Naive thymus-derived CD4-positive, alpha-beta T cell (primary cell): ENCODE measurements at regions of chr12 and their contacts with region 1.

Region 1: DNA sequence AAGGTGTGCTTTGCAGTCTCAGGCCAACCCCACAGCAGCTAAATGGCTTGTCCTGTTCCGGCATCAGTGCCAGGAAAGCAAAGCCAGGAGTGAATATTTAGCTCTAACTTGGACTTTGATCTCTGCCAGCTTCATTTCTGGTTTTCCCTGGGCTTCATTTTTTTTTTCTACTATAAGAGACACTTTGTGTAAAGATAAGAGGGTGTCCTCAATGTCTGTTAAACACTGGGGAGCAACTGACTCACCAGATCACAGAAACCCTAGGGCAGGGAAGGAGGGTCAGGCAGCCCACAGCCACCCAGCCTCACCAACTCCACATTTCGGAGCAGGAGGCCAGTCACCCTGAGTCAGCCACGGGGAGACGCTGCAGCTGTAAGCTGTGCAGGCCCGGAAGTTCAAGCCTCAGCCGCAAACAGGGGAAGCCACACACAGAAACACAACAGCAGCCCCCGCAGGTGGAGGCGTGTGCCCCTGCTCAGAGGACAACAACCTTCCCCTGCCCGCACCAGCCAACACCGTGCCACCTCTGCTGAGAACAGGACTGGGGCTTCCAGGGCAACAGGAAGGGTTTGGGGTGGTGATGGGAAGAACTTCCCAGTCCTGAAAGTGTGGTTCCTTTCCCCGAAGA is 6.3 kb downstream of the TNFRSF1A start:
- DNase-seq: peak; percentile 56 to 85 (median 81)
- ATAC-seq: peak; percentile 82
- H3K4me3 ChIP-seq: peak overlapping the region; percentile 88
- H3K4me3 Mint-ChIP-seq: no peak overlapping the region
- H3K27ac ChIP-seq: peak overlapping the region; percentile 92
- H3K27ac Mint-ChIP-seq: no peak overlapping the region
- H3K4me1 ChIP-seq: peaks cover 58 to 67% of the 10 kb centered on the region in 2 donors
- H3K4me1 Mint-ChIP-seq: peaks cover 4 to 44% (median 36%) of the 10 kb centered on the region in 7 donors
- H3K27me3 ChIP-seq: no peaks in the 10 kb centered on the region
- H3K27me3 Mint-ChIP-seq: no peaks in the 10 kb centered on the region

Region 2: DNA sequence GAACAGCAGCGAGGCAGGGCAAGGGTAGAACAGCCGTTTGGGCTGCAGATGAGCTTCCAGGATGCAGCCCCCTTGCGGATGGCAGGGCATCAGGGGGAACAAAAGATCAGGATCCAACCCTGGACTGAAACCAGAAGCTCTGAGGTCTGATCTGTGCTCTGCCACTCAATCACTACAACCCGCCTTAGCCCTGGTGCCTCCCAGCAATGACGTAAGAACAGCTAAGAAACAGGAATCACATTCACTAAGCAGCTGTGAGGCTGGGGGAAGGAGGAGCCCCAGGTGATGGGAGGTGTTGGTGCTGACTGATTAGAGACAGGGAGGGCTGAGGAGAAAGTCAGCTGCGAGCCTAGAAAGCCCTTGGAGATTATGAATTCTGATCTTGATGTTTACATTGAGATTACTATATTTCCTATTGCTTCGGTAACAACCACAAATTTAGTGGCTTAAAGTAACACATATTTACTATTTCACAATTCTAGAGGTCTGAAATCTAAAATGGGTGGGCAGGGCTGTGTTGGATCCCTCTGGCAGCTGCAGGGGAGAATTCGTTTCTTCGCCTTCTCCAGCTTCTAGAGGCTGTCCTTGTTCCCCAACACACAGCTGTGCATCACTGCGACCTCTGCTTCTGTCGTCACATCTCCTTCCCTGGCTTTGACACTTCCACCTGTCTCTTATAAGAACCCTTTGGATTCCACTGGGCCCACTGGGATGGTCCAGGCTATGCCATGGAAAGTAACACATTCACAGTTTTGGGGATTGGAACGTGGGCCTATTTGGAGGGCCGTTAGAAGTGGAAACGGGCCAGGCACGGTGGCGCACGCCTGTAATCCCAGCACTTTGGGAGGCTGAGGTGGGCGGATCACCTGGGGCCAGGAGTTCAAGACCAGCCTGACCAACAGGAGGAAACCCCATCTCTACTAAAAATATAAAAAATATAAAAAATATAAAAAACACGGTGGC is 141.4 kb before region 1 on chr12:
- CTCF ChIA-PET with region 1: no interaction called
- POLR2A ChIA-PET with region 1: no interaction called
- intact Hi-C with region 1: no loop called
- DNase-seq: no peak
- ATAC-seq: peak; percentile 46
- H3K4me3 ChIP-seq: no peak overlapping the region
- H3K4me3 Mint-ChIP-seq: no peak overlapping the region
- H3K27ac ChIP-seq: no peak overlapping the region
- H3K27ac Mint-ChIP-seq: peak overlapping the region in 1 of 9 donors; percentile 58
- H3K4me1 ChIP-seq: no peaks in the 10 kb centered on the region
- H3K4me1 Mint-ChIP-seq: peaks cover 12 to 20% (median 16%) of the 10 kb centered on the region in 7 donors
- H3K27me3 ChIP-seq: no peaks in the 10 kb centered on the region
- H3K27me3 Mint-ChIP-seq: peaks cover 5 to 39% (median 9%) of the 10 kb centered on the region in 5 donors

Region 3: GRCh38 chr12:6323340-6323994 is 12.1 kb before region 1 on chr12:
- CTCF ChIA-PET with region 1: interaction called, 31 read pairs
- POLR2A ChIA-PET with region 1: interaction called, 26 read pairs
- intact Hi-C with region 1: loop called (anchors 1 kb)
- DNase-seq: peak in 5 of 9 donors; percentile 49 to 59 (median 52)
- ATAC-seq: peak; percentile 90
- H3K4me3 ChIP-seq: peak overlapping the region; percentile 45
- H3K4me3 Mint-ChIP-seq: peak overlapping the region; percentile 63 to 90 (median 82)
- H3K27ac ChIP-seq: peak overlapping the region; percentile 35
- H3K27ac Mint-ChIP-seq: peak overlapping the region; percentile 68 to 95 (median 89)
- H3K4me1 ChIP-seq: peaks cover 27 to 38% of the 10 kb centered on the region in 2 donors
- H3K4me1 Mint-ChIP-seq: peaks cover 37 to 74% (median 53%) of the 10 kb centered on the region in 7 donors
- H3K27me3 ChIP-seq: no peaks in the 10 kb centered on the region
- H3K27me3 Mint-ChIP-seq: peaks cover 0 to 6% (median 0%) of the 10 kb centered on the region in 5 donors

Region 4: GRCh38 chr12:6376079-6376869 is 40.7 kb after region 1 on chr12:
- CTCF ChIA-PET with region 1: interaction called, 19 read pairs
- POLR2A ChIA-PET with region 1: interaction called, 5 read pairs
- intact Hi-C with region 1: no loop called
- DNase-seq: no peak
- ATAC-seq: peak; percentile 69
- H3K4me3 ChIP-seq: peak overlapping the region; percentile 40
- H3K4me3 Mint-ChIP-seq: peak overlapping the region; percentile 5 to 81 (median 72)
- H3K27ac ChIP-seq: no peak overlapping the region
- H3K27ac Mint-ChIP-seq: peak overlapping the region in 8 of 9 donors; percentile 43 to 91 (median 75)
- H3K4me1 ChIP-seq: peaks cover 0 to 24% of the 10 kb centered on the region in 2 donors
- H3K4me1 Mint-ChIP-seq: peaks cover 23 to 46% (median 34%) of the 10 kb centered on the region in 7 donors
- H3K27me3 ChIP-seq: no peaks in the 10 kb centered on the region
- H3K27me3 Mint-ChIP-seq: peaks cover 0 to 18% (median 0%) of the 10 kb centered on the region in 5 donors

Region 5: GRCh38 chr12:6451348-6452244 is 116.0 kb after region 1 on chr12 and contains the start of gene TAPBPL:
- CTCF ChIA-PET with region 1: interaction called, 9 read pairs
- POLR2A ChIA-PET with region 1: interaction called, 33 read pairs
- intact Hi-C with region 1: no loop called
- DNase-seq: peak; percentile 49 to 93 (median 87)
- ATAC-seq: peak; percentile 94
- H3K4me3 ChIP-seq: peak within 1 kb of the TSS; percentile 83
- H3K4me3 Mint-ChIP-seq: peak within 1 kb of the TSS; percentile 96 to 100 (median 98)
- H3K27ac ChIP-seq: peak within 1 kb of the TSS; percentile 96
- H3K27ac Mint-ChIP-seq: peak within 1 kb of the TSS; percentile 96 to 100 (median 99)
- H3K4me1 ChIP-seq: peaks cover 50% of the 10 kb centered on the region in 2 donors
- H3K4me1 Mint-ChIP-seq: peaks cover 50 to 84% (median 73%) of the 10 kb centered on the region in 7 donors
- H3K27me3 ChIP-seq: no peaks in the 10 kb centered on the region
- H3K27me3 Mint-ChIP-seq: no peaks in the 10 kb centered on the region
- total RNA-seq, gene TAPBPL: 23.0 to 65.4 (median 52.9) TPM

Region 6: DNA sequence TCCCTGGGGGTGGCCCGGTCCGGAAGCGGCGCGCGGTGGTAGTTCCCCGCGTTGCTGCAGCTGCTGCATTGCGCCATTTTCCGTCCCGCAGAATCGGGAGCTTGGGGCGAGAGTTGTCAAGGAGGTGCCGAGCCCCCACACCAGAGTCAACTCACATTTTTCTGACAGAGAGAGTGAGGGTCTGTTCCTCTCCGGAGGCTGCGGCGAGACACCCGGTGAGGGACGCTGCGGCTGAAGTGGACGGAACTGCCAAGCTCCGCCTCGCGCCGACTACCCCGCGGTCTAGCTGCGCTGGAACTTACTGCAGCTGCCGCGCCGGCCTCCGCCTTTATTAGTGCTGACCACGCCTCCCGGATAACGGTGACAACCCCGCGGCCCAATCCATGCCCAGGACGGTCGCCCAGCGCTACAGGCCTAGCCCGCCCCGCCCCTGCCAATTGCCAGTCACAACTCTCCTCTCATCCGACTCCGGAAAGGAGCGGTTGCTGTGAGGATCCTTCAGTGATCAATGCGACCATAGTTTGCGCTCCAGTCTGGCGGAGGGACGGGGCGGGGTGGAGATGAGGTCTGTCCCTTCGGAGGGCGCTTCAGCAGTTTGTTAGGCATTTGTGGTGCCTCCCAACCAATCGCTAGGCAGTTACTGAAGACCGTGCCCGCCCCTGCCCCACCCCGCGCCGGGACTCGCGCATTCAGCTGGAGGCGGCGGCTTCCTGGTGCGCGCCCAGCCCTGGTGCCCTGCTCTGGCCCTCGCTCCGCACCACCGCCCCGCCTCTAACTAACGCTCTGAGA is 135.0 kb after region 1 on chr12 and contains the start of gene VAMP1:
- CTCF ChIA-PET with region 1: interaction called, 47 read pairs
- POLR2A ChIA-PET with region 1: interaction called, 31 read pairs
- intact Hi-C with region 1: loop called in 1 of 2 experiments (anchors 1 kb)
- DNase-seq: peak; percentile 90 to 97 (median 95)
- ATAC-seq: peak; percentile 94
- H3K4me3 ChIP-seq: peak within 1 kb of the TSS; percentile 96
- H3K4me3 Mint-ChIP-seq: peak within 1 kb of the TSS; percentile 85 to 96 (median 92)
- H3K27ac ChIP-seq: peak within 1 kb of the TSS; percentile 75
- H3K27ac Mint-ChIP-seq: peak within 1 kb of the TSS; percentile 79 to 99 (median 95)
- H3K4me1 ChIP-seq: peaks cover 38 to 39% of the 10 kb centered on the region in 2 donors
- H3K4me1 Mint-ChIP-seq: peaks cover 26 to 59% (median 52%) of the 10 kb centered on the region in 7 donors
- H3K27me3 ChIP-seq: no peaks in the 10 kb centered on the region
- H3K27me3 Mint-ChIP-seq: peaks cover 0 to 5% (median 0%) of the 10 kb centered on the region in 5 donors
- total RNA-seq, gene VAMP1: 38.7 to 123 (median 47.9) TPM

Region 7: DNA sequence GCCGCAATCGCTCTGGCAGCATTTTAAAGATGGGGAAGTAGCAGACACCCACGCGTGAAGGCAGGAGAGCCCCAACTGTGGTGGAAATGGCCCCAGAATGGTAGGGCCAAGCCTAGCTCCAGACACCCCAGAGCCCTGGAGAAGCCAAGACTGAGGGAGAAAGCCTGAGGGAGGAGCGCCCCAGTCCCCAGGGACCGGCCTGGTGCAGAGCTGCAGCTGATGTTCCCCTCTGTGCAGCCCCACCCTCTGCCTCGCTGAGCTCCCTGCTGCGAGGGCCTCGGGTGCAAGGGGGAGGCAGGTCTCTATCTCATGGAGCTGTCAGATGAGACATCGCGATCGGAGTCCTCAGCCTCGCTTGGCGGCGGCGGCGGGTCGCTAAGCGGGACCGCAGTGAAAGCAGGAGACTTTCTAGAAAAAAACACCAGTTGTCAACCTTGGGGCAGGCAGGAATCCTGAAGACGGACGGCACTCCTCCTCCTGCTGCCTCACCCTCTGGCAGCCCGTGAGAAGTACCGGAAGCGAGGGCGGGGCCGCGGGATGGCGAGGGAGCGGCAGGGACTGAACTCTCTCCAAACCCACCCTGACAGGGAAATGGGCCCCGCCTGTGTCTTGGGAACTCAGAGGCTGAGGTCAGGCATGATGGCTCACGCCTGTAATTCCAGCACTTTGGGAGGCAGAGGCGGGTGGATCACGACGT is 204.8 kb after region 1 on chr12:
- CTCF ChIA-PET with region 1: interaction called, 8 read pairs
- POLR2A ChIA-PET with region 1: interaction called, 26 read pairs
- intact Hi-C with region 1: loop called (anchors 1 kb)
- DNase-seq: peak in 6 of 9 donors; percentile 29 to 69 (median 36)
- ATAC-seq: peak; percentile 23
- H3K4me3 ChIP-seq: peak overlapping the region; percentile 27
- H3K4me3 Mint-ChIP-seq: peak overlapping the region; percentile 66 to 85 (median 80)
- H3K27ac ChIP-seq: peak overlapping the region; percentile 54
- H3K27ac Mint-ChIP-seq: peak overlapping the region; percentile 57 to 92 (median 83)
- H3K4me1 ChIP-seq: peaks cover 23 to 34% of the 10 kb centered on the region in 2 donors
- H3K4me1 Mint-ChIP-seq: peaks cover 32 to 61% (median 56%) of the 10 kb centered on the region in 7 donors
- H3K27me3 ChIP-seq: no peaks in the 10 kb centered on the region
- H3K27me3 Mint-ChIP-seq: no peaks in the 10 kb centered on the region

Region 8: GRCh38 chr12:7122811-7123769 is 787.5 kb after region 1 on chr12:
- CTCF ChIA-PET with region 1: no interaction called
- POLR2A ChIA-PET with region 1: no interaction called
- intact Hi-C with region 1: no loop called
- DNase-seq: no peak
- ATAC-seq: no peak
- H3K4me3 ChIP-seq: no peak overlapping the region
- H3K4me3 Mint-ChIP-seq: no peak overlapping the region
- H3K27ac ChIP-seq: no peak overlapping the region
- H3K27ac Mint-ChIP-seq: no peak overlapping the region
- H3K4me1 ChIP-seq: no peaks in the 10 kb centered on the region
- H3K4me1 Mint-ChIP-seq: peaks cover 0 to 6% (median 4%) of the 10 kb centered on the region in 7 donors
- H3K27me3 ChIP-seq: no peaks in the 10 kb centered on the region
- H3K27me3 Mint-ChIP-seq: no peaks in the 10 kb centered on the region